ENCODE measurements at regions of chr3 and their contacts with region 1.

Region 1: DNA sequence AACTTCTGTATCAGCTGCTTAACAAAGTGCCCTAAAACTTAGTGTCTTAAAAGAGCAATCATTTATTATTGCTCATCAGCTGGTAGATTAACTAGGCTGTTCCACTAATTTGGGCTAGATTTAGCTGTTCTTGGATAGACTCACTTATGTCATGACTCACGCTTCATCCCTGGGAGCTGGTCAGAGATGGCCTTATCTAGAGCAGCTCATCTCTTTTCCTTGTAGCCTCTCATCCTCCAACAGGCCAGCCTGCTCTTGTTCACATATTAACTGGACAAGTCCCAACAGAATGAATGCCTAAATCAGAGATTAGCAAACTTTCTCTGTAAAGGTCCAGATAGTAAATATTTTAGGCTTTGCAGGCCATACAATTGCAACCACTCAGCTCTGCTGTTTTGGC is 66.9 kb upstream of the PLAAT1 start:
- DNase-seq: no peak
- ATAC-seq: no peak
- H3K4me3 ChIP-seq: no peak overlapping the region
- H3K27ac ChIP-seq: no peak overlapping the region
- H3K4me1 ChIP-seq: no peaks in the 10 kb centered on the region
- H3K27me3 ChIP-seq: peaks cover 6% of the 10 kb centered on the region
- CTCF ChIP-seq: no peak
- POLR2A ChIP-seq: no peak
- RAD21 ChIP-seq: no peak

Region 2: GRCh38 chr3:192929755-192930547 is 244.2 kb before region 1 on chr3:
- CTCF ChIA-PET with region 1: no interaction called
- POLR2A ChIA-PET with region 1: no interaction called
- RAD21 ChIA-PET with region 1: no interaction called
- intact Hi-C with region 1: no loop called
- DNase-seq: no peak
- ATAC-seq: no peak
- H3K4me3 ChIP-seq: no peak overlapping the region
- H3K27ac ChIP-seq: no peak overlapping the region
- H3K4me1 ChIP-seq: no peaks in the 10 kb centered on the region
- H3K27me3 ChIP-seq: no peaks in the 10 kb centered on the region
- CTCF ChIP-seq: no peak
- POLR2A ChIP-seq: no peak
- RAD21 ChIP-seq: no peak

Region 3: GRCh38 chr3:193016437-193016901 is 157.7 kb before region 1 on chr3:
- CTCF ChIA-PET with region 1: no interaction called
- POLR2A ChIA-PET with region 1: no interaction called
- RAD21 ChIA-PET with region 1: no interaction called
- intact Hi-C with region 1: no loop called
- DNase-seq: no peak
- ATAC-seq: no peak
- H3K4me3 ChIP-seq: no peak overlapping the region
- H3K27ac ChIP-seq: no peak overlapping the region
- H3K4me1 ChIP-seq: no peaks in the 10 kb centered on the region
- H3K27me3 ChIP-seq: no peaks in the 10 kb centered on the region
- CTCF ChIP-seq: no peak
- POLR2A ChIP-seq: no peak
- RAD21 ChIP-seq: no peak

Region 4: DNA sequence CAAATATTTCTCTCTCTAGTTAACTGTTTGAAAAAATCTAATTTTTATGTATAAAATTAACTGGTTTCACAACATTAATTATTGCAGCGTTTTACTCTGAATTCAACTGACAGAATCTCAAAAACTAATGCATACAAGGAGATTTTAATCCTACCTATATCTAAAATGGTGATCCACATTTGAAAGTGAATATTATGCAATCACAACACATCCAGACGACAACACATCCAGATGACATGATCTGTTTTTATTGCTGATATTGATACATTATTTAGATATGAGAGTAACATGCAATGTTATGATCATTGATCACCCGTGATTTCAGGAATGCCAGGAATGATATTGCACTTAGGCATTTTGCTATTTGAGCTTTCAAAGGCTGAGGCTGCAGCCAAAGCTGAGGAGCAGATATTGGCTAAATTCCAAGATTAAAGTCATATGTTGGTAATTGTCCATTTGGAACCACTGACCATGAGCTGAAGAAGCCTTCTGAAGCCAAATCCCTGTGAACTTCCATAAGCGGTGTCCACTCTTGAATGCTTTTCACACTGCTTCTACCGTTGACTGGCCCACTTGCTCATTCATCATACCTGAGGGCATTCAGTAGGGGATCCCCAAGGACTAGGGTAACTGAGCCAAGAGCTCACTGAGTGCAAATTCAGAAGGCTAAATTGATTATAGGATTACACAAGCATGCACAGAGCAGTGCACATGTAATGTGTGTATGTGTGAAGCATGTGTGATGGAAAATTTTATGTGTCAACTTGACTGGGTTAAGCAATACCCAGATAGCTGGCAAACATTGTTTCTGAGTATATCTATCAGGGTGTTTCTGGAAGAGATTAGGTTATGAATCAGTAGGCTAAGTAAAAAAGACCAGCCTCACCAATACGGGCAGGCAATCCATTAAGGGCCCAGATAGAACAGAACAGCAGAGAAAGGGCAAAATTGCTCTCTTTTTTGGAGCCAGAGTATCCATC is 25.4 kb before region 1 on chr3:
- CTCF ChIA-PET with region 1: no interaction called
- POLR2A ChIA-PET with region 1: no interaction called
- RAD21 ChIA-PET with region 1: no interaction called
- intact Hi-C with region 1: loop called (anchors 2 kb)
- DNase-seq: no peak
- ATAC-seq: no peak
- H3K4me3 ChIP-seq: no peak overlapping the region
- H3K27ac ChIP-seq: no peak overlapping the region
- H3K4me1 ChIP-seq: no peaks in the 10 kb centered on the region
- H3K27me3 ChIP-seq: 0 out of 2 replicates have a peak, but pooled peaks cover 14% of the 10 kb centered on the region
- CTCF ChIP-seq: no peak
- POLR2A ChIP-seq: no peak
- RAD21 ChIP-seq: no peak

Region 5: GRCh38 chr3:193190146-193190786 is 16.1 kb after region 1 on chr3:
- CTCF ChIA-PET with region 1: no interaction called
- POLR2A ChIA-PET with region 1: no interaction called
- RAD21 ChIA-PET with region 1: no interaction called
- intact Hi-C with region 1: no loop called
- DNase-seq: peak; percentile 19
- ATAC-seq: peak; percentile 83
- H3K4me3 ChIP-seq: no peak overlapping the region
- H3K27ac ChIP-seq: no peak overlapping the region
- H3K4me1 ChIP-seq: no peaks in the 10 kb centered on the region
- H3K27me3 ChIP-seq: peaks cover 28% of the 10 kb centered on the region
- CTCF ChIP-seq: peak; percentile 18 to 56 (median 47); a peak in 3 of 6 replicates
- POLR2A ChIP-seq: no peak
- RAD21 ChIP-seq: peak; percentile 55

Region 6: GRCh38 chr3:193883551-193883950 is 709.4 kb after region 1 on chr3:
- CTCF ChIA-PET with region 1: no interaction called
- POLR2A ChIA-PET with region 1: no interaction called
- RAD21 ChIA-PET with region 1: no interaction called
- intact Hi-C with region 1: no loop called
- DNase-seq: no peak
- ATAC-seq: peak; percentile 25
- H3K4me3 ChIP-seq: peak overlapping the region in 1 of 2 experiments; percentile 33; a peak in 2 of 4 replicates
- H3K27ac ChIP-seq: no peak overlapping the region
- H3K4me1 ChIP-seq: peaks cover 33 to 61% of the 10 kb centered on the region in 2 experiments
- H3K27me3 ChIP-seq: no peaks in the 10 kb centered on the region
- CTCF ChIP-seq: no peak
- POLR2A ChIP-seq: no peak
- RAD21 ChIP-seq: no peak

Measured in HCT116 (cell line).